Psoas muscle (tissue), 8 donors: ENCODE measurements at regions of chr20 and their contacts with region 1.

Region 1: GRCh38 chr20:4082406-4083097 is 67.2 kb upstream of the RNF24 start:
- DNase-seq: peak in 1 of 2 donors; percentile 69
- ATAC-seq: no peak
- H3K4me3 ChIP-seq: no peak overlapping the region
- H3K27ac ChIP-seq: no peak overlapping the region
- H3K4me1 ChIP-seq: peaks cover 3% of the 10 kb centered on the region
- H3K27me3 ChIP-seq: peaks cover 0 to 1% (median 0%) of the 10 kb centered on the region in 3 donors
- CTCF ChIP-seq: no peak

Region 2: DNA sequence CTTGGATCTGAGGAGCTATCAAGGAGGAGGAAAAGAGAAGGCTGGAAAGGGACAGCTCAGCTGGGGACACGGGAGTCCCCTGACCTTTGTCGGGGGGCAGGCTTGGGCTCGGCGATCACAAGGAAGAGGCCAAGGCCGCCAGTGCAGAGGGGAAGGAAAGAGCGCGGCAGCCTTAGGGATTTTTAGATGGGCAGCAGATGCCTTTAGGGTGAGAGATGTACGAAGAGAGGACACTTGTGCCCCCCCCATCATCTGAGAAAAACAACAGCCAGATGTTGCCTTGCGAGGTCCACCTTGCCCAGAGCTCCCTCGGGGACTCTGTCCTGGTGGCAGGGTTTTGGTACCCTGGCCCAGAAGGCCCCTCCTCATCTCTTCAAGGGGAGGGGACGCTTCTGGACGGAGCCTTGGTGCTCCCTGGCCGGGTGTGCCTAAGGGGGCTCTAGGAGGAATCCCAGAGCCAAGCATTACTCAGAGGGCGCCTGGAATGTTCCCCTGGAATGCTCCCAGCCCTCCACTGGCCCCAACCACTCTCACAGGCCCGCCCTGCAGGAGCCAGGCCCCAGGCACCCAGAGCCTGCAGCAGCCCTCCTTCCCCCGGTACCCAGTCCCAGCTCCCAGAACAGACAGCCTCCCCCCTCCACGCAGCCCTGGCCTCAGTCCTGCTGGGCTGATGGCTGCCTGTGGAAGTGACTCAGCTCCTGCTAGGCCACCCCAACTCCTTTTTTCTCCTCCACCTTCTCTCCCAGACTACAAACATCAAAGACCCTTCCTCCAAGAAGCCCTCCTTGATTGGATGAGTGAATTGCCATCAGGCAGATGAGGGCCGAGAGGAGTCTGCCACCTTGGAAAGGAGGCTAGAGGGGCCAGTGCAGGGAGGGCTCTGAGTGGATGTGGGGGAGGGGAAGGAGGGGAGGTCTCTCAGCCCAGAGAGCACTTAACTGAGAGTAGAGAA is 402.5 kb before region 1 on chr20:
- intact Hi-C with region 1: loop called (anchors 5 to 10 kb)
- DNase-seq: peak; percentile 78 to 79
- ATAC-seq: peak in 2 of 4 donors; percentile 11 to 30
- H3K4me3 ChIP-seq: peak overlapping the region; percentile 60
- H3K27ac ChIP-seq: peak overlapping the region; percentile 38
- H3K4me1 ChIP-seq: no peaks in the 10 kb centered on the region
- H3K27me3 ChIP-seq: peaks cover 0 to 30% (median 3%) of the 10 kb centered on the region in 3 donors
- CTCF ChIP-seq: no peak

Region 3: DNA sequence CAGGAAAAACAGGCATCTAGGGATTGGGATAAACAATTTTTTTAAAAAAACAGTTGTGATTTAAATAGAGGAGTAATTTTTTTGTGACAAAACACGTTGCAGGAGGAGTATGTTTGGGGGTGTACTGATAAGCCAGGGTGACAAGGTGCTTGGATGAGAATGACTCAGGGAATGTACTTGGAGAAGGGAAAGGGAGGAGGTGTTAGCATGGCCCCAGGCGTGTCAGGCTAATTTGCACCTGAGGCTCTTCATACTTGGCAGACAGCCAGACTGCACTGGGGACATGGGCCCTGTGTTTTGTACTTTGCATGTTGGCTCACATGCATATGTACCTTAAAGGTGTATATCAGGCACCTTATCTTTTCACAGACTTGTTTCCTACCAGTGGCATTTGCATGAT is 170.6 kb before region 1 on chr20:
- intact Hi-C with region 1: no loop called
- DNase-seq: no peak
- ATAC-seq: no peak
- H3K4me3 ChIP-seq: no peak overlapping the region
- H3K27ac ChIP-seq: no peak overlapping the region
- H3K4me1 ChIP-seq: no peaks in the 10 kb centered on the region
- H3K27me3 ChIP-seq: no peaks in the 10 kb centered on the region
- CTCF ChIP-seq: no peak

Region 4: GRCh38 chr20:3927486-3928291 is 154.9 kb before region 1 on chr20:
- intact Hi-C with region 1: loop called in 1 of 2 experiments (anchors 10 kb)
- DNase-seq: peak in 1 of 2 donors; percentile 37
- ATAC-seq: peak in 3 of 4 donors; percentile 24 to 43 (median 38)
- H3K4me3 ChIP-seq: no peak overlapping the region
- H3K27ac ChIP-seq: no peak overlapping the region
- H3K4me1 ChIP-seq: peaks cover 19% of the 10 kb centered on the region
- H3K27me3 ChIP-seq: no peaks in the 10 kb centered on the region
- CTCF ChIP-seq: no peak

Region 5: GRCh38 chr20:3995067-3995748 is 87.3 kb before region 1 on chr20:
- intact Hi-C with region 1: no loop called
- DNase-seq: no peak
- ATAC-seq: no peak
- H3K4me3 ChIP-seq: no peak overlapping the region
- H3K27ac ChIP-seq: no peak overlapping the region
- H3K4me1 ChIP-seq: no peaks in the 10 kb centered on the region
- H3K27me3 ChIP-seq: no peaks in the 10 kb centered on the region
- CTCF ChIP-seq: no peak

Region 6: GRCh38 chr20:4014031-4014474 is 68.5 kb before region 1 on chr20:
- intact Hi-C with region 1: loop called (anchors 1 to 5 kb)
- DNase-seq: no peak
- ATAC-seq: peak in 2 of 4 donors; percentile 36 to 51
- H3K4me3 ChIP-seq: peak overlapping the region; percentile 85
- H3K27ac ChIP-seq: no peak overlapping the region
- H3K4me1 ChIP-seq: peaks cover 5% of the 10 kb centered on the region
- H3K27me3 ChIP-seq: no peaks in the 10 kb centered on the region
- CTCF ChIP-seq: peak; percentile 50